H1 (cell line): ENCODE measurements at regions of chr9 and their contacts with region 1.

Region 1: GRCh38 chr9:16138561-16139491 is 586.0 kb downstream of the CCDC171 start:
- DNase-seq: no peak
- H3K4me3 ChIP-seq: no peak overlapping the region
- H3K27ac ChIP-seq: no peak overlapping the region
- H3K4me1 ChIP-seq: peaks cover 0 to 3% (median 2%) of the 10 kb centered on the region in 4 experiments; a peak in 3 of 7 replicates
- H3K27me3 ChIP-seq: no peaks in the 10 kb centered on the region
- CTCF ChIP-seq: no peak
- EP300 ChIP-seq: no peak
- POLR2A ChIP-seq: no peak
- RAD21 ChIP-seq: no peak

Region 2: GRCh38 chr9:15873569-15874177 is 265.2 kb before region 1 on chr9:
- CTCF ChIA-PET with region 1: interaction called, 55 read pairs
- POLR2A ChIA-PET with region 1: no interaction called
- DNase-seq: no peak
- H3K4me3 ChIP-seq: no peak overlapping the region
- H3K27ac ChIP-seq: no peak overlapping the region
- H3K4me1 ChIP-seq: no peaks in the 10 kb centered on the region
- H3K27me3 ChIP-seq: no peaks in the 10 kb centered on the region
- CTCF ChIP-seq: peak in 2 of 3 experiments; percentile 41 to 43; a peak in 2 of 4 replicates
- EP300 ChIP-seq: no peak
- POLR2A ChIP-seq: no peak
- RAD21 ChIP-seq: peak; percentile 67 to 73

Region 3: DNA sequence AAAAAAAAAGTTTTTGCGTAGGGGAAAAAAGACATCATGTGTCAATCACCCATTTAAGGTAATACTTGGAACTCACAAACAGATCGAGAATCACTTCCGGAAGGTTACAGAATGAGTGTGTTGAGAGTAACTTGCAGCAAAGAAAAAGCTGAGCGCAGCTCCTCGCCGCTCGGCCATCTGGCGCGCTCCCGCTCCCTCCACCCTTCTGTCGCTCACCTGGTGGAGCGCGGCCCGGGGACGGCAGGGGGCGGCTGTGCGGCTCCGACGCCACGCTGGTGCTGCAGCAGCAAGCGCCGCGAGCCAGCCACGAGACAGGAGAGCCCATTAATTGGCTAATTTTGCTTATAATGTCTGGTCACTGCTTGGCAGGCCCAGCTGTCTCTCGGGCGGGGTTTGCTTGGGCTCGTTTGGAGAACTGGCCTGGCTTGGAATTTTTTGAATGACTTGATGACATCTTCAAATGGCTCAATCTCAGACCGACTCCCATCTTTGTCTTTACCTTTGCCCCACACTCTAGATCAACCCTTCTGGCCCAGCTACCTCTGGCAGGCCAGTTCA is 15.8 kb after region 1 on chr9:
- CTCF ChIA-PET with region 1: interaction called, 15 read pairs
- POLR2A ChIA-PET with region 1: interaction called, 3 read pairs
- DNase-seq: peak; percentile 36 to 82
- H3K4me3 ChIP-seq: peak overlapping the region in 3 of 4 experiments; percentile 18 to 50 (median 23); a peak in 6 of 8 replicates
- H3K27ac ChIP-seq: no peak overlapping the region
- H3K4me1 ChIP-seq: peaks cover 0 to 3% (median 1%) of the 10 kb centered on the region in 4 experiments; a peak in 5 of 7 replicates
- H3K27me3 ChIP-seq: peaks cover 0 to 16% (median 6%) of the 10 kb centered on the region in 4 experiments; a peak in 5 of 7 replicates
- CTCF ChIP-seq: peak; percentile 59 to 70 (median 60)
- EP300 ChIP-seq: no peak
- POLR2A ChIP-seq: no peak
- RAD21 ChIP-seq: peak; percentile 48 to 67

Region 4: DNA sequence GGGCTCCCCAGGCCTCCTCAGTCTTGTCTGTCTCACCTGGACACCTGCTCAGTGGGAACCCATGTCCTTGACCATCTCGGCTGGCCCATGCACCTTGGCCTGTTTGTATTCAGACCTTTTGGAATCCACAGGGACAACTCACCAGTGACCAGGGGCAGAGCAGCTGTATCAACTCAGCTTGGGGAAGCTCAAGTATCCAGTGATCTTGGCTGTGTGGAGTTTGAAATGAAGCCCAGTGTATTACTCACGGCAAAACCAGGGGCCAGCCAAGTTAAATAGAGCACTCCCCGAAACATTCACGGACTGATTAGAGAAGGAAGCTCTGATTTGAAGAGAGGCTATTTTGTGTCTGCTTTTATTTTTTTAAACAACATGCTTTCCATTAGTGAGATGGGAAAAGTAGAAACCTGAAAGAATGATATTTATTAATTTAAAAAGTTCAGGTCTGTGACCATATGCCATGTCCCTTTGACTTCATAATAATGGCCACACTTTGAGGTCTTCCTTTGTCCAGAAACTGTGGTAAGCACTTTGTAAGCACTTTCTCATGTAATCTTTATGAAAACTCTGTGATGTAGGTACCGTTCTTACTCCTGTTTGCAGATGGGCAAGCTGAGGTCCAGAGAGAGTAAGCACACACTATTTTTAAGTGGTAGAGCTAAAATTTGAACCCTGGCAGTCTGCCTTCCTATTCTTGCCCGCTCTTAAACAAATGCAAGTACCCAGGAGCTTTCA is 75.1 kb after region 1 on chr9:
- CTCF ChIA-PET with region 1: no interaction called
- POLR2A ChIA-PET with region 1: no interaction called
- DNase-seq: no peak
- H3K4me3 ChIP-seq: no peak overlapping the region
- H3K27ac ChIP-seq: no peak overlapping the region
- H3K4me1 ChIP-seq: peaks cover 0 to 3% (median 2%) of the 10 kb centered on the region in 4 experiments; a peak in 1 of 7 replicates
- H3K27me3 ChIP-seq: no peaks in the 10 kb centered on the region
- CTCF ChIP-seq: no peak
- EP300 ChIP-seq: no peak
- POLR2A ChIP-seq: no peak
- RAD21 ChIP-seq: no peak